Testis (tissue), 5 donors: ENCODE measurements at regions of chr11 and their contacts with region 1.

Region 1: DNA sequence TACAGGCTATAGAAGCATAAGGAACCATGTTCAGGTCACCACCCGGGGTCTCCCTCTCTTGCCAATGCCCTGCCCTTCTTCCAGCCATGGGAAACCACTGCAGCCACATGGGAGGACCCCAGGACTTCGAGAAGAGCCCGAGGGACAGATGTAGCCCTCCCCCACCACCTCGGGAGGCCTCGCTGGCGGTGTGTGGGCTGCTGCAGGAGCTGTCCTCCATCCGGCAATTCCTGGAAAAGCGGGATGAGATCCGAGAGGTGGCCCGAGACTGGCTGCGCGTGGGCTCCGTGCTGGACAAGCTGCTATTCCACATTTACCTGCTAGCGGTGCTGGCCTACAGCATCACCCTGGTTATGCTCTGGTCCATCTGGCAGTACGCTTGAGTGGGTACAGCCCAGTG is 14.5 kb downstream of the HTR3A start:
- DNase-seq: no peak
- H3K4me3 ChIP-seq: no peak overlapping the region
- H3K27ac ChIP-seq: no peak overlapping the region
- H3K4me1 ChIP-seq: no peaks in the 10 kb centered on the region
- H3K27me3 ChIP-seq: no peaks in the 10 kb centered on the region
- CTCF ChIP-seq: no peak
- POLR2A ChIP-seq: no peak

Region 2: GRCh38 chr11:114040706-114041211 is 51.4 kb after region 1 on chr11:
- intact Hi-C with region 1: no loop called
- DNase-seq: no peak
- H3K4me3 ChIP-seq: no peak overlapping the region
- H3K27ac ChIP-seq: no peak overlapping the region
- H3K4me1 ChIP-seq: peaks cover 9% of the 10 kb centered on the region
- H3K27me3 ChIP-seq: no peaks in the 10 kb centered on the region
- CTCF ChIP-seq: no peak
- POLR2A ChIP-seq: no peak

Region 3: GRCh38 chr11:114758627-114759026 is 769.2 kb after region 1 on chr11:
- intact Hi-C with region 1: loop called (anchors 10 kb)
- DNase-seq: no peak
- H3K4me3 ChIP-seq: no peak overlapping the region
- H3K27ac ChIP-seq: no peak overlapping the region
- H3K4me1 ChIP-seq: no peaks in the 10 kb centered on the region
- H3K27me3 ChIP-seq: no peaks in the 10 kb centered on the region
- CTCF ChIP-seq: no peak
- POLR2A ChIP-seq: no peak